ENCODE measurements at regions of chr1 and their contacts with region 1.

Region 1: DNA sequence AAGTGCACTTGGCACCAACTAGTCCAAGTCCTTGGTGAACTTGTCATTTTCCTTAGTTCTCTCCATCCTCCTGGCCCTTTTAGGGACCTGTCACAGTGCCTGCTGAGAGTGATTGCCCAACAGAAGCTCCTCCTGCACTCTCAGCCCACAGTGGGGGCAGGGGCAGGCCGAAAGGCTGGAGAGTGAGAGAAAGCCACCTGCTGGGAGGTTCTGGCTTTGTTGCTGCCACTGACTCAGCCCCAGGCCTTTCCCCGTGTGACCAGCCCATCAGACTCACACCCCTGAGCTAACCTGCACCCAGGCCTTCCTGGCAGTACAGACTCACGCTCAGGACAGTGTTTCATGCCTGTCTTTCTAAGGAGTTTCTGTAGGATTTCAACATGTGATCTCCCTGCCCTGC is 17.1 kb upstream of the PROK1 start:
- DNase-seq: peak; percentile 67
- H3K27ac ChIP-seq: no peak overlapping the region
- CTCF ChIP-seq: no peak

Region 2: GRCh38 chr1:110412576-110412975 is 21.2 kb before region 1 on chr1:
- CTCF ChIA-PET with region 1: interaction called, 13 read pairs
- POLR2A ChIA-PET with region 1: no interaction called
- DNase-seq: peak; percentile 80
- H3K27ac ChIP-seq: no peak overlapping the region
- CTCF ChIP-seq: peak; percentile 76